CD8-positive, alpha-beta T cell (primary cell): ENCODE measurements at regions of chr6 and their contacts with region 1.

Region 1: GRCh38 chr6:79233611-79234149 is 802 bp downstream of the HMGN3 start:
- DNase-seq: peak; percentile 14 to 80 (median 62)
- ATAC-seq: peak; percentile 44
- H3K4me3 ChIP-seq: peak overlapping the region; percentile 66 to 98
- H3K4me3 Mint-ChIP-seq: peak overlapping the region; percentile 99
- H3K27ac ChIP-seq: peak overlapping the region; percentile 46 to 66
- H3K27ac Mint-ChIP-seq: peak overlapping the region; percentile 84
- H3K4me1 ChIP-seq: peaks cover 7% of the 10 kb centered on the region
- H3K4me1 Mint-ChIP-seq: peaks cover 33% of the 10 kb centered on the region
- H3K27me3 ChIP-seq: no peaks in the 10 kb centered on the region
- H3K27me3 Mint-ChIP-seq: no peaks in the 10 kb centered on the region
- CTCF ChIP-seq: no peak

Region 2: DNA sequence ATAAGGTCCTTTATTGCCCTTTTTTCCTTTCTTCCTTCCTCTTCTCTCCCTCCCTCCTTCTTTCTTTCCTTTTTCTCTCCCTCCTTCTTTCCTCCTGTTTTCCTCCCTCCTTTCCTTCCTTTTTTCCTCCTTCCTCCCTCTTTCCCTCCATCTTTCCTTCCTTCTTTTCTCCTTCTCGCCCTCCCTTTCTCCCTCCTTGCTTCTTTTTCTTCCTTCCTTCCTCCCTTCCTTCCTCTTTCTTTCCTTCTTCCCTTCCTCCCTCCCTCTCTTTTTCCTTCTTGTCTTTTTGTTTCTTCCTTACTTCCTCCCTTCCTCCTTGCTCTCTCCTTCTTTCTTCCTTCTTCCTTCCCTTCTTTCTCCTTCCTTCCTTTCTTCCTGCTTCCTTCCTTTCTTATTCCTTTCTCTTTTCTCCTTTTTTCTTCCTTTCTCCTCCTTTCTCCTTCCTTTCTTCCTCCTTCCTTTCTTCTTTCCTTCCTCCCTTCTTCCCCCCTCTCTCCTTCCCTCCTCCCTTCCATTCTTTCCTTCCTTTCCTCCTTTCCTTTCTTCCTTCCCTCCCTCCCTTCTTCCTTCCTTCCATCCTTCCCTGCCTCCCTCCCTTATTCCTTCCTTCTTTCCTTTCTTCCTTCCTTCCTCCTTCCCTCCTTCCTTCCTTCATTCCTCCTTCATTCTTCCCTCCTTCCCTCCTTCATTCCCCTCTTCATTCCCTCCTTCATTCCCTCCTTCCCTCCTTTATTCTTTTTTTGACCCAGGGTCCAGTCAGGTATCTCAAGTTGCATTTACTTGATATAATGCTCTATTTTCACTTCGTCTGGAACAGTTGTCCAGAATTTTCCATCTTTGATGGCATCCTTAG is 143.9 kb before region 1 on chr6:
- CTCF ChIA-PET with region 1: no interaction called
- POLR2A ChIA-PET with region 1: no interaction called
- intact Hi-C with region 1: no loop called
- DNase-seq: no peak
- ATAC-seq: no peak
- H3K4me3 ChIP-seq: no peak overlapping the region
- H3K4me3 Mint-ChIP-seq: no peak overlapping the region
- H3K27ac ChIP-seq: no peak overlapping the region
- H3K27ac Mint-ChIP-seq: no peak overlapping the region
- H3K4me1 ChIP-seq: no peaks in the 10 kb centered on the region
- H3K4me1 Mint-ChIP-seq: no peaks in the 10 kb centered on the region
- H3K27me3 ChIP-seq: peaks cover 0 to 3% of the 10 kb centered on the region in 2 experiments
- H3K27me3 Mint-ChIP-seq: peaks cover 8% of the 10 kb centered on the region
- CTCF ChIP-seq: peak; percentile 34

Region 3: DNA sequence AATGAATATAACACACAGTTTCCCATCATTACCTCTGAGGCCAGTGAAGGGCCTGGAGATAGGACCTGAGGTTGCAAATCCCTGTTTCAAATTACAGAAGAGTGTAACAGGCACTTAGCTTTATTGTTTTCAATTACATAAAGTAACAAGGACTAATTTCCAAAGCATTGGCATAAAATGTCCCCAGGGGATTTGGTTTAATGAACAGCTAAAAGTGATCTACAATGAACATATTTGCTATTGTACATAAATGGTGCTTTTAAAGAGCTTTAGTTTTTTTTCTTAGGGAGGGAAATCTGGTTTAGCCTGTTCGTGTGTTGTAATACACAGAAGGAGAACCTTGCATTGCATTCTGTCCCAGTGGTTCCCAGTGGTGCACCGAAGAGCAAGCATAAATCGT is 53.6 kb before region 1 on chr6:
- CTCF ChIA-PET with region 1: no interaction called
- POLR2A ChIA-PET with region 1: no interaction called
- intact Hi-C with region 1: no loop called
- DNase-seq: no peak
- ATAC-seq: no peak
- H3K4me3 ChIP-seq: no peak overlapping the region
- H3K4me3 Mint-ChIP-seq: no peak overlapping the region
- H3K27ac ChIP-seq: no peak overlapping the region
- H3K27ac Mint-ChIP-seq: no peak overlapping the region
- H3K4me1 ChIP-seq: no peaks in the 10 kb centered on the region
- H3K4me1 Mint-ChIP-seq: no peaks in the 10 kb centered on the region
- H3K27me3 ChIP-seq: peaks cover 0 to 8% of the 10 kb centered on the region in 2 experiments
- H3K27me3 Mint-ChIP-seq: peaks cover 4% of the 10 kb centered on the region
- CTCF ChIP-seq: no peak

Region 4: GRCh38 chr6:79196912-79197311 is 36.8 kb before region 1 on chr6:
- CTCF ChIA-PET with region 1: no interaction called
- POLR2A ChIA-PET with region 1: no interaction called
- intact Hi-C with region 1: no loop called
- DNase-seq: no peak
- ATAC-seq: no peak
- H3K4me3 ChIP-seq: no peak overlapping the region
- H3K4me3 Mint-ChIP-seq: no peak overlapping the region
- H3K27ac ChIP-seq: no peak overlapping the region
- H3K27ac Mint-ChIP-seq: no peak overlapping the region
- H3K4me1 ChIP-seq: no peaks in the 10 kb centered on the region
- H3K4me1 Mint-ChIP-seq: no peaks in the 10 kb centered on the region
- H3K27me3 ChIP-seq: no peaks in the 10 kb centered on the region
- H3K27me3 Mint-ChIP-seq: no peaks in the 10 kb centered on the region
- CTCF ChIP-seq: no peak

Region 5: GRCh38 chr6:79536954-79537747 is 303.5 kb after region 1 on chr6 and contains the start of gene LCA5:
- CTCF ChIA-PET with region 1: no interaction called
- POLR2A ChIA-PET with region 1: no interaction called
- intact Hi-C with region 1: loop called (anchors 5 to 10 kb)
- DNase-seq: peak; percentile 54 to 92 (median 79)
- ATAC-seq: peak; percentile 96
- H3K4me3 ChIP-seq: peak within 1 kb of the TSS; percentile 65 to 69
- H3K4me3 Mint-ChIP-seq: no peak within 1 kb of the TSS
- H3K27ac ChIP-seq: peak within 1 kb of the TSS; percentile 14 to 32
- H3K27ac Mint-ChIP-seq: no peak within 1 kb of the TSS
- H3K4me1 ChIP-seq: peaks cover 5% of the 10 kb centered on the region
- H3K4me1 Mint-ChIP-seq: no peaks in the 10 kb centered on the region
- H3K27me3 ChIP-seq: no peaks in the 10 kb centered on the region
- H3K27me3 Mint-ChIP-seq: peaks cover 12% of the 10 kb centered on the region
- CTCF ChIP-seq: no peak
- total RNA-seq, gene LCA5: not detected

Region 6: DNA sequence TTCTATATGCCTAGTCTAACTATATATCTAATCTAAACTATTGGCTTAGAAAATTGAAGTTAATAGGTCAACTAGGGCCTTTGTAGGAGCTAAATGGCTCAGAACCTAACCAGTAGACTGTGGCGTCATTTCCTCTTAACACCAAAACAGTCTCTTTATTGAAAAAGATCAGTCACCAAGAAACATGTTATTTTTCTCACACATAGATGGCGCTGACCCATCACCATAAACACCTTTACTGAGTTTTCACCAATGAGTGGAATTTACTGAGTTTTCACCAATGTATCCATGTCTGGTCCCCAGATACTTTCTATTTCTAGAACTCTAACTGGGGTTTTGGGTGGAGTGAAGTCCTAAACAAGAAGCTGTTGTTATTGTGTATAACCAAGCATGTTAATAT is 1508.8 kb after region 1 on chr6:
- CTCF ChIA-PET with region 1: no interaction called
- POLR2A ChIA-PET with region 1: no interaction called
- intact Hi-C with region 1: no loop called
- DNase-seq: no peak
- ATAC-seq: no peak
- H3K4me3 ChIP-seq: no peak overlapping the region
- H3K4me3 Mint-ChIP-seq: no peak overlapping the region
- H3K27ac ChIP-seq: no peak overlapping the region
- H3K27ac Mint-ChIP-seq: no peak overlapping the region
- H3K4me1 ChIP-seq: no peaks in the 10 kb centered on the region
- H3K4me1 Mint-ChIP-seq: no peaks in the 10 kb centered on the region
- H3K27me3 ChIP-seq: no peaks in the 10 kb centered on the region
- H3K27me3 Mint-ChIP-seq: no peaks in the 10 kb centered on the region
- CTCF ChIP-seq: no peak